Endothelial cell of umbilical vein (primary cell): ENCODE measurements at regions of chr19 and their contacts with region 1.

Region 1: DNA sequence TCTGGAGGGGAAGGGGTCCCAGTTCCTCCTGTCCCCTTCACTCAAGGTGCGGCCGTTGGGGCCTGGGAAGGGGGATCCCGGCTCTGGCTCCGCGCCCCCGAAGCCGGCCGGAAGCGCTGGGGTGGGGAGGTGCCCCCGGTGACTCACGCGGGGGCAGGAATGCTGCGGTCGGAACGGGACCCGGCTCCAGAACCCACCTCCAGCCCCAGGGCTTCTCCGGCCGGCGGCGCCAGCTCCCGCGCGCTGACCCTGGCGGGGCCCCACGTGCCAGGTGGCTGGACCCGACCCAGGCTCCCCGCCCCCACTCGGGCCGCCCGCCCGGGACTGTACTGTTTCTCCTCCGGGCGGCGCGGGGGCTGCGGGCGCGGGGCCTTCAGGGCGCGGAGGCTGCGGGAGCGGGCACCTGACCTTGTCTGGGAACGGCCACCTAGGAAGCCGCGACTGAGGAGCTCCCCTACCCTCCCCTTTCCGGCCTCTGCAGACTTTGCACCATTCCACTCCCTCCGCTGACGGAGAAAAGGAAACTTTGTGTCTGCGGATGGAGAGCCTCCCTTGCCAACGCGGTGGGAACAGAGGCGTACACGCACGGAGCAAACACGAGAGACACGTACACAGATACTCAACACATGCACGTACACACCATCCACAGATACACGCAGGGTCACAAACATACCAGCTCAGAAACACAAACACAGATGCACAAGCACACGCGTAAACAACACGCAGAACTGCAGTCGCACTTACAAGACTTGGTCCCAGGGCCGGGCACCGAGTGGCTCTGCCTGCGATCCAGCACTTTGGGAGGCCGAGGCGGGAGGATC is 7.2 kb downstream of the AXL start:
- DNase-seq: peak; percentile 59
- H3K4me3 ChIP-seq: peak overlapping the region in 2 of 3 experiments; percentile 32 to 50
- H3K27ac ChIP-seq: peak overlapping the region; percentile 76
- H3K4me1 ChIP-seq: peaks cover 44% of the 10 kb centered on the region
- H3K27me3 ChIP-seq: no peaks in the 10 kb centered on the region
- CTCF ChIP-seq: no peak
- POLR2A ChIP-seq: no peak

Region 2: GRCh38 chr19:41273076-41273475 is 46.8 kb after region 1 on chr19:
- CTCF ChIA-PET with region 1: no interaction called
- POLR2A ChIA-PET with region 1: no interaction called
- dilution Hi-C with region 1: no loop called
- intact Hi-C with region 1: no loop called
- DNase-seq: no peak
- H3K4me3 ChIP-seq: no peak overlapping the region
- H3K27ac ChIP-seq: no peak overlapping the region
- H3K4me1 ChIP-seq: peaks cover 24% of the 10 kb centered on the region
- H3K27me3 ChIP-seq: no peaks in the 10 kb centered on the region
- CTCF ChIP-seq: no peak
- POLR2A ChIP-seq: no peak

Region 3: DNA sequence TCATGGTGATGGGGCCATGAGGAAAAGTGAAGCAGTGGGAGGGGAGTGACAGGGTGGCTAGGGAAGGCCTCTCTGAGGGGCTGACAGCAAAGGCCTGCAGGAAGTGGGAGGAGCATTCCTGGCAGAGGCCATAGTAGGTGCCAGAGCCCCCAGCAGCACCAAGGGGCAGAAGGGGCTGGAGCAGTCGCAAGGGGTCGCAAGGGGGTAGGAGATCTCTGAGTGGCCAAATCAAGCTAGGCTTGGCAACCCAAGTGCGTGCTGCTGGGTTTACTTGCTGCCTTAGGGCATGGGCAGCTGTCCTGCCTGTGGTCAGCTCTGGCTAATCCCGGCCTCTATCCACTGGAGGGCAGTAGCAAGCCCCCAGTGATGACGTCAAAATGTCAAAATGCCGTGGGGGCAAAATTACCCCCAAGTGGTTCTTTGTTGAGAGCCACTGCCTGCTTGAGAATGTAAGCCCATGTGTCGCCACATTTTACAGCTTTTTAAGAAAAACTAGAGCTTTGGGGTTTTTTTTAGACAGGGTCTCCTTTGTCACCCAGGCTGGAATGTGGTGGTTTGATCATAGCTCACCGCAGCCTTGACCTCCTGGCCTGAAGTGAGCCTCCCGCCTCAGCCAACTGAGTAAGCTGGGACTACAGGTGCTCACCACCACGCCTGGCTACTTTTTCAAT is 95.5 kb after region 1 on chr19:
- CTCF ChIA-PET with region 1: no interaction called
- POLR2A ChIA-PET with region 1: no interaction called
- dilution Hi-C with region 1: no loop called
- intact Hi-C with region 1: loop called (anchors 5 kb)
- DNase-seq: peak; percentile 76
- H3K4me3 ChIP-seq: no peak overlapping the region
- H3K27ac ChIP-seq: peak overlapping the region; percentile 100
- H3K4me1 ChIP-seq: peaks cover 46% of the 10 kb centered on the region
- H3K27me3 ChIP-seq: no peaks in the 10 kb centered on the region
- CTCF ChIP-seq: peak; percentile 83 to 89
- POLR2A ChIP-seq: peak; percentile 38